Psoas muscle (tissue), 8 donors: ENCODE measurements at regions of chr2 and their contacts with region 1.

Region 1: GRCh38 chr2:102473020-102473419 is at the start of gene SLC9A4:
- DNase-seq: peak in 1 of 2 donors; percentile 25
- ATAC-seq: peak in 3 of 4 donors; percentile 44 to 77 (median 71)
- H3K4me3 ChIP-seq: no peak within 1 kb of the TSS
- H3K27ac ChIP-seq: no peak within 1 kb of the TSS
- H3K4me1 ChIP-seq: no peaks in the 10 kb centered on the region
- H3K27me3 ChIP-seq: no peaks in the 10 kb centered on the region
- CTCF ChIP-seq: peak; percentile 84
- total RNA-seq, gene SLC9A4: 0.08 TPM in 1 of 4 donors, not detected in the others

Region 2: DNA sequence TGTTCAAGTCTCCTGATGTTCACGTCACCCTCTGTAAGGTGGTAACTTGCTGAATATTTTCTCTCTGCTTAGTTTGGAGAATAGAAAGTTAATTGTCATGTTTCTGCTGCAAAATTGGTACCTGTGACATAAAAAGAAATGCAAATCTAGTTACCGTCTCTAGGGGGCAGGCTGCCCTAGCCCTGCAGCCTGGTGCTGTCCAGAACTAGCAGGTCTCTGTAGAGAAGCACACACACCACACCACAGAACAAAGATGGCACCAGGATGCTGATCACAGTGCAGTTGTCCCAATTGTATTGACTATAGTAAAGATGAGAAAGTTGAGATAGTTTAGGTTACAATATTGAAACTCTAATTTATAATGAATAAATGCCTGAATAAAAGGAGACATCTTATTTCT is 47.0 kb after region 1 on chr2:
- intact Hi-C with region 1: loop called in 1 of 2 experiments (anchors 5 kb)
- DNase-seq: no peak
- ATAC-seq: peak; percentile 70 to 85 (median 78)
- H3K4me3 ChIP-seq: no peak overlapping the region
- H3K27ac ChIP-seq: no peak overlapping the region
- H3K4me1 ChIP-seq: no peaks in the 10 kb centered on the region
- H3K27me3 ChIP-seq: no peaks in the 10 kb centered on the region
- CTCF ChIP-seq: peak; percentile 63

Region 3: DNA sequence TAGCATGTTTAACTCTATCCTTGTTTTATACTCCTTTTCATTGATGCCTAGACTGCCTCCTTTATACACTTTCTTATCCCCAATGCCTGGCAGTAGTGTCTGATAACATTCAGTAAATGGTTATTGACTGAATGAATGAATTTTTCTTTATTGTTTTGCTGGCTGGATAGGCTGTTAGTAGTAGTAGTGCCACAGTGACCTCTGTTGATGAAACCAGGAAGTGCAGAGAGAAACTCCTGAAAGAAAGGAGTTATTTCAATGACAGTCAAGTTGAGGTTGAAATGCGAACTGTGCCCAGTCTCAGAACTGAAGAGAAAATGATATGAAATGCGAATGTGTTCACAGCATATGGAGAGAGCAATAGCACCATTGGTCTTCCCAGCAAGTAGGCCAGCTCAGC is 119.6 kb after region 1 on chr2:
- intact Hi-C with region 1: loop called (anchors 5 kb)
- DNase-seq: no peak
- ATAC-seq: no peak
- H3K4me3 ChIP-seq: no peak overlapping the region
- H3K27ac ChIP-seq: no peak overlapping the region
- H3K4me1 ChIP-seq: peaks cover 3% of the 10 kb centered on the region
- H3K27me3 ChIP-seq: peaks cover 0 to 2% (median 0%) of the 10 kb centered on the region in 3 donors
- CTCF ChIP-seq: peak; percentile 48

Region 4: GRCh38 chr2:102599480-102599879 is 126.5 kb after region 1 on chr2:
- intact Hi-C with region 1: loop called (anchors 5 kb)
- DNase-seq: no peak
- ATAC-seq: peak in 3 of 4 donors; percentile 71 to 80 (median 77)
- H3K4me3 ChIP-seq: no peak overlapping the region
- H3K27ac ChIP-seq: no peak overlapping the region
- H3K4me1 ChIP-seq: peaks cover 6% of the 10 kb centered on the region
- H3K27me3 ChIP-seq: no peaks in the 10 kb centered on the region
- CTCF ChIP-seq: no peak

Region 5: GRCh38 chr2:102615622-102616436 is 142.8 kb after region 1 on chr2:
- intact Hi-C with region 1: loop called in 1 of 2 experiments (anchors 5 kb)
- DNase-seq: peak; percentile 29 to 78
- ATAC-seq: peak; percentile 63 to 67 (median 65)
- H3K4me3 ChIP-seq: no peak overlapping the region
- H3K27ac ChIP-seq: no peak overlapping the region
- H3K4me1 ChIP-seq: no peaks in the 10 kb centered on the region
- H3K27me3 ChIP-seq: peaks cover 0 to 2% (median 0%) of the 10 kb centered on the region in 3 donors
- CTCF ChIP-seq: peak; percentile 94

Region 6: DNA sequence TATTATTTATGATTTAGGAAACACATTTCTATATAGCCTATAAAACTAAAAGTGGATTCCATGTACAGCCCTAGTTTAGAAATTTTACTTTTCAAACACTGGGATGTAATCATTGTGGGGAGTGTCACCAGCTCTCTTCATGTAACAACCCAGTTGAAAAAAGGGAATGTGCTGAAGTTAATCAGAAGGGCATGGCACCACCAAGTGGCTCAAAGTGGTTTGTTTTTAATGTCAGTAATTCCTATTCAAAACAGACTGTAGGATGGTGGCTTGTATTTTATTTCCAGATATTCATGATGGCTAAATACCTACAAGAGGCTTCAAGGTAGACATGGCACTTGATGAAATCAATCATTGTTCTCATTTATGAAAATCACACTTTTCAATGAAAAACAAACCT is 230.7 kb after region 1 on chr2:
- intact Hi-C with region 1: loop called (anchors 5 kb)
- DNase-seq: no peak
- ATAC-seq: peak; percentile 62 to 93 (median 76)
- H3K4me3 ChIP-seq: no peak overlapping the region
- H3K27ac ChIP-seq: no peak overlapping the region
- H3K4me1 ChIP-seq: no peaks in the 10 kb centered on the region
- H3K27me3 ChIP-seq: no peaks in the 10 kb centered on the region
- CTCF ChIP-seq: peak; percentile 52